ENCODE measurements at regions of chr22 and their contacts with region 1.

Region 1: GRCh38 chr22:45553351-45554039 is 50.8 kb downstream of the FBLN1 start:
- DNase-seq: peak; percentile 90
- H3K4me3 Mint-ChIP-seq: peak overlapping the region; percentile 65
- H3K27ac Mint-ChIP-seq: peak overlapping the region; percentile 41
- H3K4me1 Mint-ChIP-seq: peaks cover 27% of the 10 kb centered on the region
- H3K27me3 Mint-ChIP-seq: no peaks in the 10 kb centered on the region
- CTCF ChIP-seq: peak; percentile 87

Region 2: GRCh38 chr22:45268958-45269844 is 284.3 kb before region 1 on chr22:
- CTCF ChIA-PET with region 1: no interaction called
- intact Hi-C with region 1: loop called (anchors 5 kb)
- DNase-seq: peak; percentile 88
- H3K4me3 Mint-ChIP-seq: peak overlapping the region; percentile 82
- H3K27ac Mint-ChIP-seq: peak overlapping the region; percentile 77
- H3K4me1 Mint-ChIP-seq: peaks cover 23% of the 10 kb centered on the region
- H3K27me3 Mint-ChIP-seq: no peaks in the 10 kb centered on the region
- CTCF ChIP-seq: peak; percentile 93

Region 3: GRCh38 chr22:45441138-45441537 is 112.4 kb before region 1 on chr22:
- CTCF ChIA-PET with region 1: interaction called, 9 read pairs
- intact Hi-C with region 1: loop called (anchors 1 kb)
- DNase-seq: peak; percentile 73
- H3K4me3 Mint-ChIP-seq: peak overlapping the region; percentile 20
- H3K27ac Mint-ChIP-seq: no peak overlapping the region
- H3K4me1 Mint-ChIP-seq: peaks cover 13% of the 10 kb centered on the region
- H3K27me3 Mint-ChIP-seq: no peaks in the 10 kb centered on the region
- CTCF ChIP-seq: peak; percentile 32

Measured in Calu3 (cell line).